ENCODE measurements at regions of chr1 and their contacts with region 1.

Region 1: GRCh38 chr1:51963592-51964308 is 26.8 kb downstream of the RAB3B start:
- DNase-seq: no peak
- ATAC-seq: no peak
- H3K4me3 ChIP-seq: no peak overlapping the region
- H3K4me3 Mint-ChIP-seq: no peak overlapping the region
- H3K27ac ChIP-seq: no peak overlapping the region
- H3K27ac Mint-ChIP-seq: no peak overlapping the region
- H3K4me1 ChIP-seq: no peaks in the 10 kb centered on the region
- H3K4me1 Mint-ChIP-seq: no peaks in the 10 kb centered on the region
- H3K27me3 ChIP-seq: no peaks in the 10 kb centered on the region
- H3K27me3 Mint-ChIP-seq: peaks cover 0 to 20% (median 11%) of the 10 kb centered on the region in 5 donors

Region 2: GRCh38 chr1:51686450-51686849 is 277.3 kb before region 1 on chr1:
- CTCF ChIA-PET with region 1: no interaction called
- POLR2A ChIA-PET with region 1: no interaction called
- intact Hi-C with region 1: no loop called
- DNase-seq: no peak
- ATAC-seq: no peak
- H3K4me3 ChIP-seq: no peak overlapping the region
- H3K4me3 Mint-ChIP-seq: no peak overlapping the region
- H3K27ac ChIP-seq: no peak overlapping the region
- H3K27ac Mint-ChIP-seq: no peak overlapping the region
- H3K4me1 ChIP-seq: no peaks in the 10 kb centered on the region
- H3K4me1 Mint-ChIP-seq: peaks cover 0 to 27% (median 20%) of the 10 kb centered on the region in 7 donors
- H3K27me3 ChIP-seq: no peaks in the 10 kb centered on the region
- H3K27me3 Mint-ChIP-seq: no peaks in the 10 kb centered on the region

Region 3: DNA sequence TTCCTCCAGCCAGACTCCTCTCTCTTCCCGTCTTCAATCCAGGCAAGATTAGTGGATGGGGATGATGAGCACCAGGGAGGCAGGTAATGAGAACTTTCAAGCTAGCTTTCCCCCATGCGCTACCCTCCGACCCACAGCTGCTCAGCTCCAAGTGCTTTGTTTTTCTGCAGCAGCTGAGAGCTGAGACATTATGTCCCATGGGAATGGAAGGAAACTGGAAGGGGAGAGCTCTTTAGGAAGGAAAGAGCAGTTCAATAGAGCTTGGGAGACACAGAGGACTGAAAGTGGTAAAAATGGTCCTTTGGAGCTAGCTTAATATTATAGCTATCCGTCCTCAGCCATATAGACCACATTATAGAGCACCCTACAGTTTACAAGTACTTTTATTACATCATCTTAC is 13.0 kb before region 1 on chr1:
- CTCF ChIA-PET with region 1: interaction called, 10 read pairs
- POLR2A ChIA-PET with region 1: no interaction called
- intact Hi-C with region 1: no loop called
- DNase-seq: no peak
- ATAC-seq: no peak
- H3K4me3 ChIP-seq: no peak overlapping the region
- H3K4me3 Mint-ChIP-seq: no peak overlapping the region
- H3K27ac ChIP-seq: no peak overlapping the region
- H3K27ac Mint-ChIP-seq: no peak overlapping the region
- H3K4me1 ChIP-seq: no peaks in the 10 kb centered on the region
- H3K4me1 Mint-ChIP-seq: peaks cover 0 to 10% (median 0%) of the 10 kb centered on the region in 7 donors
- H3K27me3 ChIP-seq: no peaks in the 10 kb centered on the region
- H3K27me3 Mint-ChIP-seq: peaks cover 0 to 11% (median 8%) of the 10 kb centered on the region in 5 donors

Region 4: DNA sequence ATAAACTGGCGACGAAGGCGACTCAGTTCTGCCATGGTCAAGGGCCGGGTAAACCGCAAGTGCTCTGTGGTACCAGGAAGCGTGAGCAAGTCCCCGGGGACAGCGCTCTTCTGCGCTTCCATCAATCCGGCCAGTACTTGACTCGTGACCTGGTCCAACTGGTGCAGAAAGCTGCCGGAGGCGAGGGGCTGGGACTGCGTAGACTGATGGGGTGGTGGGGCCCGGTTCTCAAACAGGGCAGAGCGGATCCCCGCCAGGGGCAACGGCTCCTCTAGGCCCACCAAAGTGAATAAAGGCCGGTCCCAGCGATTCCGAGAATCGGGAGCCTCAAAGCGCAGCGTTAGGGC is 69.0 kb after region 1 on chr1:
- CTCF ChIA-PET with region 1: no interaction called
- POLR2A ChIA-PET with region 1: no interaction called
- intact Hi-C with region 1: no loop called
- DNase-seq: peak in 1 of 9 donors; percentile 28
- ATAC-seq: no peak
- H3K4me3 ChIP-seq: peak overlapping the region; percentile 94
- H3K4me3 Mint-ChIP-seq: peak overlapping the region; percentile 91 to 96 (median 93)
- H3K27ac ChIP-seq: peak overlapping the region; percentile 73
- H3K27ac Mint-ChIP-seq: peak overlapping the region; percentile 92 to 97 (median 96)
- H3K4me1 ChIP-seq: peaks cover 20 to 22% of the 10 kb centered on the region in 2 donors
- H3K4me1 Mint-ChIP-seq: peaks cover 18 to 52% (median 38%) of the 10 kb centered on the region in 7 donors
- H3K27me3 ChIP-seq: no peaks in the 10 kb centered on the region
- H3K27me3 Mint-ChIP-seq: no peaks in the 10 kb centered on the region